Naive thymus-derived CD4-positive, alpha-beta T cell (primary cell): ENCODE measurements at regions of chr11 and their contacts with region 1.

Region 1: GRCh38 chr11:4187055-4187988 is 92.7 kb downstream of the RRM1 start:
- DNase-seq: peak; percentile 59 to 95 (median 79)
- ATAC-seq: peak; percentile 95
- H3K4me3 ChIP-seq: peak overlapping the region; percentile 52
- H3K4me3 Mint-ChIP-seq: peak overlapping the region; percentile 67 to 88 (median 77)
- H3K27ac ChIP-seq: no peak overlapping the region
- H3K27ac Mint-ChIP-seq: peak overlapping the region in 1 of 9 donors; percentile 57
- H3K4me1 ChIP-seq: peaks cover 0 to 4% of the 10 kb centered on the region in 2 donors
- H3K4me1 Mint-ChIP-seq: peaks cover 0 to 19% (median 3%) of the 10 kb centered on the region in 7 donors
- H3K27me3 ChIP-seq: no peaks in the 10 kb centered on the region
- H3K27me3 Mint-ChIP-seq: peaks cover 0 to 13% (median 0%) of the 10 kb centered on the region in 5 donors

Region 2: DNA sequence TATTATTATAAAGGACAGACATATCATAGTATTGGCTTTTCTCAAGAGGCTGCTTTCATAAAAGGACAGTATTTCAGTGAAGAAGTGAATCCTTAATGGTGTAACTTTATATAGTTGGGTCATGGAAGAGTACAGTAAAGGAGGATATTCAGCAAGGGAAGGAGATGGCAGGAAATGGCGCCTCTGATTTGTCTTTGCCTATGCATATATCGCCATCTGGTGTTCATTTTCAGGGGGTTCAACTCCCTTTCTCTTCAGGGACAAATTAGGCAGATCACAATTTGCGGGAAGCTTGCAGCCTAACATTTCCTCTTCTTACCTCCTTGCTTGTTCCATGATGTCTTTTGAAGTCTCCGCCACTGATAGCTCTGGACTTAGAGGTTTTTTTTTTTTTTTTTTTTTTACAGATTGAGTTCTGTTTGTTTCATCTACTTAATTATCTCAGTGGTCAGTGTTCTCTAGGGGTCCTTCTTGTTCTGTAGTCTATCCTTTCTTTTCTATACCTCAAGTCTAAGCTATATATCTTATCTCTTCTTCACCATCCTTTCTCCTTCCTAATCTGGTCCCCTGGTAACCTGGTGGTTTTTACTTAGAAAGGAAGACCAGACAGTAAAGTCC is 114.5 kb before region 1 on chr11:
- CTCF ChIA-PET with region 1: no interaction called
- POLR2A ChIA-PET with region 1: no interaction called
- intact Hi-C with region 1: no loop called
- DNase-seq: peak in 7 of 9 donors; percentile 58 to 80 (median 75)
- ATAC-seq: peak; percentile 90
- H3K4me3 ChIP-seq: no peak overlapping the region
- H3K4me3 Mint-ChIP-seq: no peak overlapping the region
- H3K27ac ChIP-seq: peak overlapping the region; percentile 55
- H3K27ac Mint-ChIP-seq: peak overlapping the region; percentile 7 to 92 (median 85)
- H3K4me1 ChIP-seq: peaks cover 8 to 25% of the 10 kb centered on the region in 2 donors
- H3K4me1 Mint-ChIP-seq: peaks cover 32 to 78% (median 74%) of the 10 kb centered on the region in 7 donors
- H3K27me3 ChIP-seq: no peaks in the 10 kb centered on the region
- H3K27me3 Mint-ChIP-seq: no peaks in the 10 kb centered on the region

Region 3: DNA sequence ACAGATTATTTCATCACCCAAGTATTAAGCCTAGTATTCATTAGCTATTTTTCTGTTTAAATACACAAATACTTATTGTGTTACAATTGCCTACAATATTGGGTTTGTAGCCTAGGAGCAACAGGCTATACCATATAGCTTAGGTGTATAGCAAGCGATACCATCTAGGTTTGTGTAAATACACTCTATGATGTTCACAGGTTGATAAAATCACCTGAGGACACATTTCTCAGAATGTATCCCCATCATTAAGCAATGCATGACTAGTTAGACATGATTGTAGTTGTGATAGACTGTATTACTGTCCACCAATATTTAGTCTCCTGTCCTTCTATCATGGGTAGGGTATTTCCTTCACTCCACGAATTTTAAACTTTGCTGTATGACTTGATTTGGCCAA is 303.5 kb after region 1 on chr11:
- CTCF ChIA-PET with region 1: interaction called, 55 read pairs
- POLR2A ChIA-PET with region 1: no interaction called
- intact Hi-C with region 1: loop called (anchors 1 kb)
- DNase-seq: no peak
- ATAC-seq: no peak
- H3K4me3 ChIP-seq: no peak overlapping the region
- H3K4me3 Mint-ChIP-seq: no peak overlapping the region
- H3K27ac ChIP-seq: no peak overlapping the region
- H3K27ac Mint-ChIP-seq: no peak overlapping the region
- H3K4me1 ChIP-seq: no peaks in the 10 kb centered on the region
- H3K4me1 Mint-ChIP-seq: peaks cover 0 to 7% (median 0%) of the 10 kb centered on the region in 7 donors
- H3K27me3 ChIP-seq: no peaks in the 10 kb centered on the region
- H3K27me3 Mint-ChIP-seq: peaks cover 16 to 27% (median 18%) of the 10 kb centered on the region in 5 donors

Region 4: DNA sequence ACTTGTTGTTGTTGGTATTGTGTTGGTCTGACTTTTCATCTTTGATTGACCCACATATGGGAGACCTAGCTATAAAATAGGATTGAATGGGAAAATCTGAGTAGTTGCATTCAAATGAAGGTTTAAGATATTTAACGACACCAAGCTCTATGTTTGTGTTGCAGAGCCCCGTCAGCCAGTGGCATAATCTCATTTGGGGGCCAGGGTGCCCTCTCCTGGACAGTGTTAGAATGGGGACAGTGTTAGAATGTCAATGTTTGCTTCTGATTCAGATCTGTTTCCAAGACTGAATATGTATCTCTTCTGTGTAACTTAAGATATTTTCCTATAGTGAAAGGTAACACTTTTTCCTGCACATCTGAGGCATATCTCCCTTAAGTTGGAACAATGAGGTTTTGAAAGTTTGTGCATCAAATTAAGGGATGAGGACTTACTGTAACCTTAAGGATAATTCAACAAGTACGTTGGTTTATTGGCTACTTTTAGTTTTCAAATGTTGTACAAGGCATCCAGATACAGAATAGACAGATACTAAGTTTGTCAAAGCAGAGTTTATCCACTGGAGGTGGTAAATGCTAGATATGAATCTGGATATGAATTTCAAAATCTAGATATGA is 352.4 kb after region 1 on chr11:
- CTCF ChIA-PET with region 1: interaction called, 59 read pairs
- POLR2A ChIA-PET with region 1: no interaction called
- intact Hi-C with region 1: loop called (anchors 1 kb)
- DNase-seq: peak; percentile 14 to 52 (median 31)
- ATAC-seq: peak; percentile 73
- H3K4me3 ChIP-seq: no peak overlapping the region
- H3K4me3 Mint-ChIP-seq: no peak overlapping the region
- H3K27ac ChIP-seq: no peak overlapping the region
- H3K27ac Mint-ChIP-seq: no peak overlapping the region
- H3K4me1 ChIP-seq: no peaks in the 10 kb centered on the region
- H3K4me1 Mint-ChIP-seq: no peaks in the 10 kb centered on the region
- H3K27me3 ChIP-seq: no peaks in the 10 kb centered on the region
- H3K27me3 Mint-ChIP-seq: peaks cover 0 to 18% (median 13%) of the 10 kb centered on the region in 5 donors

Region 5: GRCh38 chr11:4636962-4637661 is 449.8 kb after region 1 on chr11 and contains the start of gene OR51D1:
- CTCF ChIA-PET with region 1: no interaction called
- POLR2A ChIA-PET with region 1: no interaction called
- intact Hi-C with region 1: loop called (anchors 2 to 5 kb)
- DNase-seq: peak; percentile 33 to 64 (median 54)
- ATAC-seq: peak; percentile 90
- H3K4me3 ChIP-seq: no peak within 1 kb of the TSS
- H3K4me3 Mint-ChIP-seq: no peak within 1 kb of the TSS
- H3K27ac ChIP-seq: no peak within 1 kb of the TSS
- H3K27ac Mint-ChIP-seq: no peak within 1 kb of the TSS
- H3K4me1 ChIP-seq: no peaks in the 10 kb centered on the region
- H3K4me1 Mint-ChIP-seq: no peaks in the 10 kb centered on the region
- H3K27me3 ChIP-seq: no peaks in the 10 kb centered on the region
- H3K27me3 Mint-ChIP-seq: peaks cover 0 to 21% (median 15%) of the 10 kb centered on the region in 5 donors
- total RNA-seq, gene OR51D1: not detected

Region 6: GRCh38 chr11:5291207-5291838 is 1104.0 kb after region 1 on chr11:
- CTCF ChIA-PET with region 1: no interaction called
- POLR2A ChIA-PET with region 1: no interaction called
- intact Hi-C with region 1: loop called in 1 of 2 experiments (anchors 10 kb)
- DNase-seq: no peak
- ATAC-seq: no peak
- H3K4me3 ChIP-seq: no peak overlapping the region
- H3K4me3 Mint-ChIP-seq: no peak overlapping the region
- H3K27ac ChIP-seq: no peak overlapping the region
- H3K27ac Mint-ChIP-seq: no peak overlapping the region
- H3K4me1 ChIP-seq: no peaks in the 10 kb centered on the region
- H3K4me1 Mint-ChIP-seq: no peaks in the 10 kb centered on the region
- H3K27me3 ChIP-seq: no peaks in the 10 kb centered on the region
- H3K27me3 Mint-ChIP-seq: peaks cover 0 to 5% (median 0%) of the 10 kb centered on the region in 5 donors

Region 7: GRCh38 chr11:5891216-5891800 is 1704.0 kb after region 1 on chr11:
- CTCF ChIA-PET with region 1: no interaction called
- POLR2A ChIA-PET with region 1: no interaction called
- intact Hi-C with region 1: loop called in 1 of 2 experiments (anchors 2 kb)
- DNase-seq: peak in 3 of 9 donors; percentile 0 to 10 (median 1)
- ATAC-seq: no peak
- H3K4me3 ChIP-seq: no peak overlapping the region
- H3K4me3 Mint-ChIP-seq: no peak overlapping the region
- H3K27ac ChIP-seq: no peak overlapping the region
- H3K27ac Mint-ChIP-seq: no peak overlapping the region
- H3K4me1 ChIP-seq: no peaks in the 10 kb centered on the region
- H3K4me1 Mint-ChIP-seq: no peaks in the 10 kb centered on the region
- H3K27me3 ChIP-seq: peaks cover 5% of the 10 kb centered on the region in 2 donors
- H3K27me3 Mint-ChIP-seq: peaks cover 7 to 27% (median 20%) of the 10 kb centered on the region in 5 donors